ENCODE measurements at regions of chr5 and their contacts with region 1.

Region 1: DNA sequence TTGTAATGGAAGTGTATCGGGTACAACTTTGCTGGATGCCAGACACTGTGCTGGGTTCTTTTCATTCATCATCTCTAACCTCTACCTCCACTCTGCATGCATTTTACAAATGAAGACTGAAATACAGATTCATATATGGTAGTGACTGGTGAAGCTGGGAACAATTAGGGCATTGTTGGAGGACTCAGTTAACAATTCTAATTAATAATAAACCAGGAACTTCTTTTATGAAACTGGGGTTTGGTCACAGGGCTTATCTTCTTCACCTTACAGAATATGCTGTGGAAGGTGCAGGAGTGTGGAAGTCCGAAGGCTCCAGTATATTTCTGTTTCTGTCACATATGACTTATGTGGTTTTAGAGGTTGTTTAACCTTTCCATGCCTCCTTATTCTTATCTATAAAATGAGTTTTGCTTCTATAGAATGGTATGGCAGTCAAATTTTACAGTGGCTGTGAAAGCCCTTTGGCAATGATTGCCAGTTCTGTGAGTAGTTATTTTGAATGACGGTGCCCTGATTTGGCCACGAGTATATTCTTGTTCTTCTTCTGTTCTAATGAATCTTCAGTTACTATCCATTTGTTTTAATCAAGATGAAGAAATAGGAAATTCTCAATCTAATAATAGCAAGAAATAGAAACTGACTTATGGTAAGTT is 284.7 kb downstream of the GABRB2 start:
- DNase-seq: no peak
- H3K4me3 Mint-ChIP-seq: no peak overlapping the region
- H3K27ac Mint-ChIP-seq: no peak overlapping the region
- H3K4me1 Mint-ChIP-seq: peaks cover 25% of the 10 kb centered on the region
- H3K27me3 Mint-ChIP-seq: no peaks in the 10 kb centered on the region
- CTCF ChIP-seq: no peak

Region 2: GRCh38 chr5:160699301-160699700 is 562.5 kb before region 1 on chr5:
- CTCF ChIA-PET with region 1: no interaction called
- intact Hi-C with region 1: loop called (anchors 10 kb)
- DNase-seq: peak; percentile 57
- H3K4me3 Mint-ChIP-seq: no peak overlapping the region
- H3K27ac Mint-ChIP-seq: peak overlapping the region; percentile 45
- H3K4me1 Mint-ChIP-seq: peaks cover 44% of the 10 kb centered on the region
- H3K27me3 Mint-ChIP-seq: no peaks in the 10 kb centered on the region
- CTCF ChIP-seq: no peak

Region 3: DNA sequence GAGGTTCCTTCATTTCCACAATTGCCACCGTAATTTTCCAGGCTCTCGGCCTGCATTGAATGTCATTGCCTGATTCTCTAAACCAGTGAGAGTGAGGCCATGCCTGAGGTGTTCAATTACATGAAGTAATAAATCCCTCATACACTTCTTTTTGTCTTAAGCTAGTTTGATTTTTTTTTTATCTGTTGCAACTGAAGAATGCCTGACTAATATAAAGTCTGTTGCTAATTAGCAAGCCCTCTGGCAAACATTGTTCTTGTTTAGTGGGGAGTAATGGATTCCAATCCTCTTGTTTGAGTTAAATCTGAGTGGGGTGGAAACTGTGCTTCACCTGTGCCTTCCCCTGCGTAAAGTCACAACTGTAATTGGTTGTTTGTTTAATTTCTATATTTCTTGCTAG is 71.7 kb before region 1 on chr5:
- CTCF ChIA-PET with region 1: no interaction called
- intact Hi-C with region 1: loop called (anchors 1 kb)
- DNase-seq: no peak
- H3K4me3 Mint-ChIP-seq: no peak overlapping the region
- H3K27ac Mint-ChIP-seq: no peak overlapping the region
- H3K4me1 Mint-ChIP-seq: peaks cover 9% of the 10 kb centered on the region
- H3K27me3 Mint-ChIP-seq: no peaks in the 10 kb centered on the region
- CTCF ChIP-seq: no peak

Region 4: DNA sequence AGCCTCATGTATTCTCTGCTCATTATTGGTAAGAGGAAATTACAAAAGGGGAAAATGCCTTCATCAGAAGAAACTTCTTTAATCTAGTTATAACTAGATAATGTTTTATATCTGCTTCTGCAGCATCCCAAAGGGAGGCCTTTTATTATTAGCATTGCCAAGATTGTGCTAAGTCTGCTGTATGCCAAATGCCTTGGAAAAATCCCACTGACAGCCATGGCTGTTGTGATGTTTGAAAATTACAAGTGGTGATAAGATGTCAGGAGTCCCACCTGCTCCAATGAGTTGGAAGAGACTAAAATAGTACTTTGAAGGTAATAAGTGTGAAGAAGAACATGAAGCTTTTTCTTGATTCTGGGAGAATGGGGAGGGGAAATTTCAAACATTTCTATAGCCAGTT is 60.2 kb before region 1 on chr5:
- CTCF ChIA-PET with region 1: no interaction called
- intact Hi-C with region 1: no loop called
- DNase-seq: no peak
- H3K4me3 Mint-ChIP-seq: no peak overlapping the region
- H3K27ac Mint-ChIP-seq: no peak overlapping the region
- H3K4me1 Mint-ChIP-seq: no peaks in the 10 kb centered on the region
- H3K27me3 Mint-ChIP-seq: no peaks in the 10 kb centered on the region
- CTCF ChIP-seq: no peak

Measured in Calu3 (cell line).